MCF 10A (cell line): ENCODE measurements at regions of chr11 and their contacts with region 1.

Region 1: DNA sequence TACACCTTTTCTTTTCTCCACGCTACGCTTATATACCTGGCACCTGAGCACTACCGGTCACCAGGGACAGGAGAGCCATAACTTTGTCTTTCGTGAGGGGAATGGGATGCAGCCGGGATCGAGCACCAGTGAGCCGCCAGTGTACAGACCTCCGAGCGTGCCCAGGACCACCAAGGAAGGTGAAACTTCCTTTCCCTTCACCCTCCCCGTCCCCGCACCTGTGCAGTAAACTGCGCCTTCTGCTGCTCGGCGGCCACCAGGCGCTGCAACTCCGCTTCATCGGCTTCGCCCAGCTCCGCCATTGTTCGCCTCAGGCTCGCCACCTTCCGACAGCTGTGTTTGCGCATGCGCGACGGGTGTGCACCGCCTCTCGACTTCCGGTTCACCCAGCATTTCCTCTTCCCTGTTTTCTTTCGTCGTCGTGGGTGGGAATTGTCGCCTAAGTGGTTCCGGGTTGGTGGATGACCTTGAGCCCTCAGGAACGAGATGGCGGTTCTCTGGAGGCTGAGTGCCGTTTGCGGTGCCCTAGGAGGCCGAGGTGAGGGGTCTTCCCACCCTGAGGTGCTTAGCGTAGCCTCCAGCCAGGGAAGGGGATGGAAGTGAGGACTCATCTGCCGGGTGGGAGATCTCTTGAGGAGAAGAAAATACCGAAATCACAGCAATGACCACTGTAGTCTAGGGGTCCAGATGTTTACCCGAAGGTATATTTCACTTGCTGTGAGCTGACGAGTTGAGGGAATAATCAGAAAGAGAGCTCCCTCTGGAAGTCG is at the starts of genes SDHD and TIMM8B:
- DNase-seq: peak; percentile 99
- H3K4me3 Mint-ChIP-seq: peak within 1 kb of the TSS; percentile 88
- H3K27ac Mint-ChIP-seq: peak within 1 kb of the TSS; percentile 95
- H3K4me1 Mint-ChIP-seq: peaks cover 43% of the 10 kb centered on the region
- H3K27me3 Mint-ChIP-seq: no peaks in the 10 kb centered on the region
- CTCF ChIP-seq: peak; percentile 21
- total RNA-seq, gene SDHD: 119 and 124 TPM in 2 replicates
- total RNA-seq, gene TIMM8B: 58.1 and 70.8 TPM in 2 replicates

Region 2: DNA sequence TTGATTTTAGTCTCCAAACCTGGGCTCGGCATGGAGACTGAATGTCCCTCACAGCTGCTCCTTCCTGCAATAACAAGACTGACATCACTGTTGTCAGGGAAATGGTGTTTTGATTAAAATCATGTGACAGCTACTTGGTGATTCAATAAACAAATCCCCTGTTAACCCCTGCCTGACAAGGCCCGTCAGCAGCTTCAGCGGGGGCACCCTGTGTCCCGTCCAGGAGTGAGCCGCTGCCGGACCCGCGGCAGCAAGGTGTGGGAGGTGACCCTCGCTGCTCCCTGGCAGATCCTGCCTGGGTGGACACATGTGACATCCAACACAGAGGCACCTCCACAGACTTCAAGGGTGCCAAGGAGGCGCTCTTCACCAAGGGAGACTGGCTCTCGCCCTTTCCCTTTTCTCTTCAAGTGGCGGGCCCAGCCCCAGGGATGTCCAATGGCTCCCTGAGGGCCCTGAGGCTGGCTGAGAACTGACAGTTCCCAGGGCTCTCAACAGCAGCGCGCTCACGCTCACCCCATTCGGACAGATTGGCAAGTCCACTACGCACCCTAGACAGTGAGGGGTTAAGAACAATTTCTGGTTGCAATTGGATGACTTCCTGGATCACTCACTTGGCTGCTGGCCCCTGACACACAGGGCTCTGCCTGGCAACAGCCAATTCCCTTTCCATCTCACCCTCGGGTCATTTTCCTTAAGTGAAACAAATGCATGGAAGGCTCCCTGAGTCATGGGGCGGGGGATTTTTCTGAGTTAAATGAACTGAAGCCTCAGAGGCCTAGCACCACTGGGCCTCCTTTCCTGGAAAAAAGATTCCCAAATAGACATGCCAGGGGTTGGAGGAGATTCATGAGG is 351.1 kb before region 1 on chr11:
- CTCF ChIA-PET with region 1: no interaction called
- POLR2A ChIA-PET with region 1: no interaction called
- intact Hi-C with region 1: no loop called
- DNase-seq: peak; percentile 99
- H3K4me3 Mint-ChIP-seq: peak overlapping the region; percentile 71
- H3K27ac Mint-ChIP-seq: peak overlapping the region; percentile 99
- H3K4me1 Mint-ChIP-seq: peaks cover 27% of the 10 kb centered on the region
- H3K27me3 Mint-ChIP-seq: no peaks in the 10 kb centered on the region
- CTCF ChIP-seq: no peak

Region 3: GRCh38 chr11:111878849-111879636 is 207.6 kb before region 1 on chr11 and contains the starts of genes CFAP68 and FDXACB1:
- CTCF ChIA-PET with region 1: no interaction called
- POLR2A ChIA-PET with region 1: interaction called, 10 read pairs
- intact Hi-C with region 1: loop called (anchors 1 kb)
- DNase-seq: peak; percentile 98
- H3K4me3 Mint-ChIP-seq: peak within 1 kb of the TSS; percentile 95
- H3K27ac Mint-ChIP-seq: peak within 1 kb of the TSS; percentile 97
- H3K4me1 Mint-ChIP-seq: peaks cover 6% of the 10 kb centered on the region
- H3K27me3 Mint-ChIP-seq: no peaks in the 10 kb centered on the region
- CTCF ChIP-seq: peak; percentile 94
- total RNA-seq, gene CFAP68: 33.6 and 38.3 TPM in 2 replicates
- total RNA-seq, gene FDXACB1: 0.79 and 1.0 TPM in 2 replicates

Region 4: GRCh38 chr11:111911563-111912401 is 174.8 kb before region 1 on chr11 and contains the start of gene CRYAB:
- CTCF ChIA-PET with region 1: no interaction called
- POLR2A ChIA-PET with region 1: no interaction called
- intact Hi-C with region 1: no loop called
- DNase-seq: peak; percentile 61
- H3K4me3 Mint-ChIP-seq: peak within 1 kb of the TSS; percentile 41
- H3K27ac Mint-ChIP-seq: peak within 1 kb of the TSS; percentile 86
- H3K4me1 Mint-ChIP-seq: peaks cover 18% of the 10 kb centered on the region
- H3K27me3 Mint-ChIP-seq: no peaks in the 10 kb centered on the region
- CTCF ChIP-seq: no peak
- total RNA-seq, gene CRYAB: 1.2 and 2.5 TPM in 2 replicates

Region 5: DNA sequence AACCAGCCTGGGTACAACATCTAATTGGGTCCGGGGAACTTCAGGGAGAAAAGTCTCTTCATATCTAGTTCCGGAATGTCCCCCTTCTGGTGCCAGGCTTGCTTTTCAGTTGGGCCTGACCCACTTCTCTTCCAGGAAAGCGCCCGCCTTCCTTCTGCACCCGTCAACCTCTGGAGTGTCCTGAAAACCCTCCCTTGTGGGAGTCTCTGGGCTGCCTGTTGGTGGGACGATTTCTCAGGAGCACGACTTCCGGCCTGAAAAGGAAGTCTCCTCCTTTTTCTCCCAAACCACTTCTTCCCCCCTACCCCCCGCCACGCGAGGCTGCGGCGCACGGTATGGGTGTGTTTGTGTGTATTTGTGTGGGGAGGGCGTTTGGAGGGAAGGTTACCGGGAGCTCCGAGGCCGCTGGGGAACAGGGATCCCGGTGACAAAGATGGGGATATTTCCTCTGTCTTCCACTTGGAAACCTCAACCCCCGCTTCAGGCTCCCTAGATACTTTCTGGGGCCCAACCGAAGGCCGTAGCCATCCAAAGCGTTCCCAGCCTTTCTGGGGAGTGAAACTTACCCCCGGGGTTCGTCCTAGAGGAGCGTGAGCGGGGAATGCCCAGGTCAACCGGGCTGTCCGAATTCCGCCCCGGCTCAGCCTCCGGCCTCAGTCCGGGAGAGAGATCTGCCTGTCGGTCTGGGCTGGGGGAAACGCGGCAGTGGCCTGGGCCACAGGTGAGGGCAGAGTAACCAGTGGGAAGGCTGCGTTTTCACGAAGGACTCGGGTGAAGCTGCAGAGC is 12.4 kb before region 1 on chr11 and contains the start of gene NKAPD1:
- CTCF ChIA-PET with region 1: interaction called, 4 read pairs
- POLR2A ChIA-PET with region 1: interaction called, 71 read pairs
- intact Hi-C with region 1: no loop called
- DNase-seq: peak; percentile 82
- H3K4me3 Mint-ChIP-seq: peak within 1 kb of the TSS; percentile 82
- H3K27ac Mint-ChIP-seq: peak within 1 kb of the TSS; percentile 99
- H3K4me1 Mint-ChIP-seq: peaks cover 26% of the 10 kb centered on the region
- H3K27me3 Mint-ChIP-seq: no peaks in the 10 kb centered on the region
- CTCF ChIP-seq: no peak
- total RNA-seq, gene NKAPD1: 25.1 and 27.5 TPM in 2 replicates

Region 6: GRCh38 chr11:112106070-112106469 is 19.5 kb after region 1 on chr11:
- CTCF ChIA-PET with region 1: interaction called, 3 read pairs
- POLR2A ChIA-PET with region 1: interaction called, 23 read pairs
- intact Hi-C with region 1: no loop called
- DNase-seq: no peak
- H3K4me3 Mint-ChIP-seq: no peak overlapping the region
- H3K27ac Mint-ChIP-seq: no peak overlapping the region
- H3K4me1 Mint-ChIP-seq: no peaks in the 10 kb centered on the region
- H3K27me3 Mint-ChIP-seq: no peaks in the 10 kb centered on the region
- CTCF ChIP-seq: no peak

Region 7: DNA sequence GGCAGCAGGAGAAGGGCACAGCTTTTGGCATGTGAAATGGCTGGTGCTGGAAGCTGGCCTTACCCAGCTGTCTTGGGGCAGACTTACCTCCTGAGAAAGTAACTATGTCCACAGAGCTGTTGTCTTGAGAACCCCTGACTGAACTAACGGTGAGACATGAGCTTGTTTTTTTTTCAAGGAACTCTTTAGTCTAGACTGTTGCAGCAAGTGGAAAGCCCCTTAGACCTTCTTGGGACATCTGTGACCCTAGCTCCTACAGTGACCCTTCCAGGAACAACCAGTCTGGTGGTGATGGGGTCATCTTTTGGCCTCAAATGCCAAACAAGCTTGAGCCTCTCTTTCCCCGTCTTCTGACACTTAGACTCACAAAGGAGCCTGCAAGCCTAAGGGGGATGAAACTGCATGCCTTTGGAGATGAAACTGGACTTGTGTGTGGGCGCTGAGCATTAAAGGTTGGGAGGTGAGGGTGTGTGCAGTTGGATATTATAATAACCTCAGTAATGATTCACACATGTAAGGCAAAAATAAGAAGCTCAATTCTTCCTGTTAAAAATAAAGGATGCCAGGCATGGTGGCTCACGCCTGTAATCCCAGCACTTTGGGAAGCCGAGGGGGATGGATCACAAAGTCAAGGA is 35.5 kb after region 1 on chr11:
- CTCF ChIA-PET with region 1: no interaction called
- POLR2A ChIA-PET with region 1: interaction called, 14 read pairs
- intact Hi-C with region 1: no loop called
- DNase-seq: no peak
- H3K4me3 Mint-ChIP-seq: no peak overlapping the region
- H3K27ac Mint-ChIP-seq: no peak overlapping the region
- H3K4me1 Mint-ChIP-seq: peaks cover 9% of the 10 kb centered on the region
- H3K27me3 Mint-ChIP-seq: no peaks in the 10 kb centered on the region
- CTCF ChIP-seq: no peak

Region 8: GRCh38 chr11:112174789-112175598 is 88.4 kb after region 1 on chr11 and contains the start of gene BCO2:
- CTCF ChIA-PET with region 1: no interaction called
- POLR2A ChIA-PET with region 1: interaction called, 4 read pairs
- intact Hi-C with region 1: loop called (anchors 1 kb)
- DNase-seq: peak; percentile 83
- H3K4me3 Mint-ChIP-seq: peak within 1 kb of the TSS; percentile 66
- H3K27ac Mint-ChIP-seq: peak within 1 kb of the TSS; percentile 93
- H3K4me1 Mint-ChIP-seq: peaks cover 15% of the 10 kb centered on the region
- H3K27me3 Mint-ChIP-seq: no peaks in the 10 kb centered on the region
- CTCF ChIP-seq: peak; percentile 83
- total RNA-seq, gene BCO2: 0.93 TPM in 1 of 2 replicates, not detected in the other

Region 9: DNA sequence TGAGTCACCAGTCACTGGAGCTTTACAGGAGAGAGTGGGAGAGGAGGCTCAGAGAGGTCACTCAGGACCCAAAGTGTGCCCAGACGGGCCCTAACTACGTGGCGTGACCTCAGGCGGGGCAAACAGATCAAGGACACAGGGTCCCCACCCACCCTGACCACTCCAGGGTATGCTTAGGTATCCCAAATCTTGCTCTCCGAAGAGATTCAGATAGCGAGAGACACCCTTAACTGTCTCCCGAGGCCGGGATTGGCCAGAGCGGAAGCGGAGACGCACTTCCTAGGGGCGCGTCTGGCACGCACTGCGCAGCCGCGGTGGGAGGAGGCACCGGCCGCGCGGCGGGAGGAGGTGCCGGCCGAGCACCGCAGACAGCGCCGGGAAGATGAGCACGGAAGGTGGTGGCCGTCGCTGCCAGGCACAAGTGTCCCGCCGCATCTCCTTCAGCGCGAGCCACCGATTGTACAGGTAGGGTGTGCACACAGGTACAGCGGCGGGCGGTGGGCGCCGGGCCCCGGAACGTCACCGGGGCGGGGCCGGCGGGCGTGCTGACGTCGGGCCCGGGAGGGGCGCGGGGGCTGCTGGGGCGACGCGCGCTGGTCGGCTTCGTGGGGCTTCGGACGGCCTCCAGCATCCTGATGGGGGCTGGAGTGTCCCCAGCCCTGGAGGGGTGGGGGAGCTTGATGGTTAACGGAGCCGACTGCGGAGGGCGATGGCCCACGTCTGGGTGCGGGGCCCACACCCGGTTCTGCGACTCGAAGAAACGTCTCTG is 139.6 kb after region 1 on chr11 and contains the start of gene PTS:
- CTCF ChIA-PET with region 1: interaction called, 3 read pairs
- POLR2A ChIA-PET with region 1: interaction called, 17 read pairs
- intact Hi-C with region 1: no loop called
- DNase-seq: peak; percentile 90
- H3K4me3 Mint-ChIP-seq: peak within 1 kb of the TSS; percentile 88
- H3K27ac Mint-ChIP-seq: peak within 1 kb of the TSS; percentile 96
- H3K4me1 Mint-ChIP-seq: peaks cover 19% of the 10 kb centered on the region
- H3K27me3 Mint-ChIP-seq: no peaks in the 10 kb centered on the region
- CTCF ChIP-seq: no peak
- total RNA-seq, gene PTS: 68.3 and 79.4 TPM in 2 replicates